Left ventricle myocardium superior (tissue), 1 donor: ENCODE measurements at regions of chr15 and their contacts with region 1.

Region 1: DNA sequence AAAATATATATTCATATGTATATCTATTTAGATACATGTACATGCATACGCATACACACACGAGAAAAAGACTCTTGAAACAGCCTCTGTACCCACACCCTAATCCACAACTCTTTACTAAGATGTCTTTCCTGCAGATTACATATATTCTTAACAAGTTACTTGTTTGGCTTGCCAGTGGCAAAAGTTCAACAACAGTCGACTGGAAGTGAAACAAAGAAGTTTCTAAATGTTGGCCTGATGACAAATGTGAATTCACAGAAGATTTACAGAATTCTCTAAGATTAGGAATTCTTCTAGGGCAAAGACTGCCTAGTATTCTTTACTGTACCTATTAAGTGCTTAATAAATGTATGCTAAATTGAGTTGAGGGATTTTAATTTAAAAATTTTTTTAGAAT is 116.8 kb downstream of the CDIN1 start:
- DNase-seq: no peak
- ATAC-seq: no peak

Region 2: GRCh38 chr15:36645106-36645505 is 51.1 kb before region 1 on chr15:
- intact Hi-C with region 1: loop called (anchors 10 kb)
- DNase-seq: no peak
- ATAC-seq: no peak

Region 3: GRCh38 chr15:36883713-36884517 is 187.7 kb after region 1 on chr15:
- intact Hi-C with region 1: no loop called
- DNase-seq: peak; percentile 91
- ATAC-seq: peak; percentile 93